ENCODE measurements at regions of chr22 and their contacts with region 1.

Region 1: DNA sequence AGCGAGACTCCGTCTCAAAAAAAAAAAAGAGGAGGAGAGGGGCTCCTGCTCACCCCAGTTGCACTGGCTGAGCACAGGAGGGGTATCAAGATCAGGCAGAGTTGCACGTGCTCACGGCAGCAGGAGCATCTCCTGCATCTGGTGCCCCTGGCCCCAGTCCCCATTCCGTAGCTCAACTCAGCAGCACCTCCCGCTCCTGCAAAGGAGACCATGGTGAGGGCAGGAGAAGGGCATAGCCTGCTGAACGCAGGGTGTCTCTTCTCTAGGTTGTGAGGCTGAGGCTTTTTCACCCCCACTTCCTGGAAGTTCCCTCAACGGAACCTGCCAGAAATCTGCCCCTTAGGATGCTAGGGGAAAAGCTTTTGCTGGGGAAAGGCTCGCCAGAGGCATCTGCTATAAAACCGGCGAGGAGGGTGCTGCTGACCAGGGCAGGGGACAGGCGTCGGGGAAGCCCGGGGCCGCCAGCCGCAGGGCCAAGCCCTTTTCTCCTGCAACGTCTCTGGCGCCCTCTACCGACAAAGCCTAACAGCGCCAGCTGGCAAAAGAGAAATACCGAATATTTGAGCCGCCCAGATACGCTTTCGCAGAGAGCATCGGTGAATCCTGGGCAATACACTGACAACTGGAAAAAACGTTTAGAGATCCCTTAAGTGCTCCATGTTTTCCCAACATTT is 1.0 kb upstream of the PPP6R2 start:
- DNase-seq: no peak
- ATAC-seq: peak; percentile 88
- H3K4me3 ChIP-seq: peak overlapping the region; percentile 80
- H3K27ac ChIP-seq: peak overlapping the region; percentile 51; the same call in 1 of the 2 replicates
- H3K4me1 ChIP-seq: 0 out of 2 replicates have a peak, but pooled peaks cover 3% of the 10 kb centered on the region
- H3K27me3 ChIP-seq: no peaks in the 10 kb centered on the region
- CTCF ChIP-seq: peak; percentile 96 to 99 (median 96); a peak in 5 of 6 replicates
- EP300 ChIP-seq: no peak
- POLR2A ChIP-seq: no peak
- RAD21 ChIP-seq: peak; percentile 93

Region 2: DNA sequence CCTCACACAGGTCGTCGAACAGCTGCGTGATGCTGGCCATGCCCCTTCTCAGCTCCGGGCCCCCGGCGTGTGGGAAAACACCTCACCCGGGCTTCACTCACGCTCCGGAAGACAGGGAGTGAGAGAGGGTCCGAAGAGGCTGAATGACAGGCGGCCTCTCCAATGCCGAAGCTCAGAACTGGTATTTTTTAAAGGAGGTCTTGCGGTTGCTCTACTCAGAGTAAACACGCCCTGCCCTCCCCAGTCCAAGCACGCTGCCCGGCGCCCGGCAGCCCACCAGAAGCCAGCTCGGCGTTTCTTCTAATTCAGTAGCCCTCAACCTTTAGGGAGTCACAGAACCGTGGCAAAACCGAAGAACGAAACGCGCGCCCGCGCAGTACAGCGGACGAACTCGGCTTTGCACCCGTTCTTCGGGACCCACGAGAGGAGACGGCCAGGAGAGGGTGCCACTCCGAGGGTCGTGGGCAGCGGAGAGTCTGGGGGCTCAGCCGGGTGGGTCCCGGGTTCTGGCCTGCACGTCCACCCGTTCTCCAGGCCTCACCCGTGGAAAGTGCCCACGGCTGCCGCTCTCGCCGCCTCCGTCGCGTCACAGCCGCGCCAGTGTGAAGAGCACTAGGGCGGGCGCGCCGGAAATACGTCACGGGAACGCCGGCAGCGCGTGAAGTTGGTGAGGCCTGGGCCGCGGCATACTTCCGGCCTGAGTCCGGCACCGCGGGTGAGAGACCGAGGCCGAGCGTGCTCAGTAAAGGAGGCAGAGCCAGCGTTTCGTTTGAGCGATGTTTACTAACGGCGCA is 97.5 kb before region 1 on chr22 and contains the start of gene TUBGCP6:
- CTCF ChIA-PET with region 1: interaction called, 20 read pairs
- POLR2A ChIA-PET with region 1: no interaction called
- RAD21 ChIA-PET with region 1: interaction called, 5 read pairs
- SMC1A ChIA-PET with region 1: interaction called, 11 read pairs
- in situ Hi-C with region 1: no loop called
- intact Hi-C with region 1: no loop called
- DNase-seq: peak; percentile 53
- ATAC-seq: peak; percentile 86
- H3K4me3 ChIP-seq: peak within 1 kb of the TSS; percentile 83
- H3K27ac ChIP-seq: peak within 1 kb of the TSS; percentile 71
- H3K4me1 ChIP-seq: peaks cover 20% of the 10 kb centered on the region
- H3K27me3 ChIP-seq: no peaks in the 10 kb centered on the region
- CTCF ChIP-seq: peak in 2 of 3 experiments; percentile 13 to 34; a peak in 3 of 6 replicates
- EP300 ChIP-seq: peak in 1 of 2 experiments; percentile 30; a peak in 1 of 4 replicates
- POLR2A ChIP-seq: peak; percentile 97
- RAD21 ChIP-seq: no peak
- polyA plus RNA-seq, gene TUBGCP6: 0.74 to 2.0 TPM

Region 3: GRCh38 chr22:50276143-50276542 is 66.0 kb before region 1 on chr22:
- CTCF ChIA-PET with region 1: interaction called, 25 read pairs
- POLR2A ChIA-PET with region 1: no interaction called
- RAD21 ChIA-PET with region 1: interaction called, 5 read pairs
- SMC1A ChIA-PET with region 1: interaction called, 4 read pairs
- in situ Hi-C with region 1: no loop called
- intact Hi-C with region 1: loop called (anchors 1 kb)
- DNase-seq: peak; percentile 66
- ATAC-seq: peak; percentile 87
- H3K4me3 ChIP-seq: no peak overlapping the region
- H3K27ac ChIP-seq: no peak overlapping the region
- H3K4me1 ChIP-seq: peaks cover 3% of the 10 kb centered on the region
- H3K27me3 ChIP-seq: no peaks in the 10 kb centered on the region
- CTCF ChIP-seq: peak; percentile 62 to 77 (median 73)
- EP300 ChIP-seq: no peak
- POLR2A ChIP-seq: no peak
- RAD21 ChIP-seq: peak; percentile 36; the same call in 1 of the 2 replicates

Region 4: GRCh38 chr22:50326959-50327710 is 15.0 kb before region 1 on chr22 and contains the start of gene DENND6B:
- CTCF ChIA-PET with region 1: interaction called, 30 read pairs
- POLR2A ChIA-PET with region 1: interaction called, 3 read pairs
- RAD21 ChIA-PET with region 1: interaction called, 3 read pairs
- SMC1A ChIA-PET with region 1: interaction called, 5 read pairs
- in situ Hi-C with region 1: no loop called
- intact Hi-C with region 1: no loop called
- DNase-seq: no peak
- ATAC-seq: peak; percentile 97
- H3K4me3 ChIP-seq: peak within 1 kb of the TSS; percentile 69
- H3K27ac ChIP-seq: peak within 1 kb of the TSS; percentile 85
- H3K4me1 ChIP-seq: peaks cover 2% of the 10 kb centered on the region; the same call in 1 of the 2 replicates
- H3K27me3 ChIP-seq: no peaks in the 10 kb centered on the region
- CTCF ChIP-seq: peak in 2 of 3 experiments; percentile 29 to 83; a peak in 2 of 6 replicates
- EP300 ChIP-seq: no peak
- POLR2A ChIP-seq: peak; percentile 84
- RAD21 ChIP-seq: peak; percentile 74
- polyA plus RNA-seq, gene DENND6B: 0.72 to 2.3 TPM